CD4-positive, alpha-beta memory T cell (primary cell): ENCODE measurements at regions of chr6 and their contacts with region 1.

Region 1: DNA sequence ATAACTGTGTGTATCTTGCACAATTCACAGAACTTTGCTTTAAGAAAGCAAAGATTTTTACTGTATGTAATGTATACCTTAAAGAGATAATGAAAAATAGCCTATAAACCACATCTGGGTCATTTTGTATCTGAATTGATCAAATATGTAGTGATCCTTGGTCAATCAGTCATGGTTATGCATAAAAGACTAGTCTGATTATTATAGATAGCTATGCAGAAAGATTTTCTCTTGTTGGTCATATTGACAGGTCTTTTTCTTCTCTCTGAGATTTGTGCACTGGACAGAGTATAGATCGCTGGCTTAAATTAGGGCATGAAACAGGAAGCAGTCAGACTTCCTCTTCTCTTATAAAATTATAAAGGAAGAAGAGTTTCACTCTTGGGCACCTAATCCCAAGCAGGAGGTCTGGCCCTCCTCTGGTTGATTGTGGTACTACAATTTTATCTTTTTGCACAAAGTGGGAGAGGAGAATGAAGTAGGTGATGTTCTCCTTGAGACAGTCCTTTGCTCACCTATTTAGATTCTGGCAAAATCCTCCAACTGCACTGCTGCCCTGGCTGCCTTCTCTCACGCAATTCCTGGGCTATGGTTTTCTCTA is 380.9 kb upstream of the RGS17 start:
- DNase-seq: peak in 2 of 5 donors; percentile 3 to 5
- H3K4me3 ChIP-seq: no peak overlapping the region
- H3K4me3 Mint-ChIP-seq: no peak overlapping the region
- H3K27ac ChIP-seq: no peak overlapping the region
- H3K27ac Mint-ChIP-seq: no peak overlapping the region
- H3K4me1 ChIP-seq: no peaks in the 10 kb centered on the region
- H3K4me1 Mint-ChIP-seq: peaks cover 0 to 1% (median 0%) of the 10 kb centered on the region in 4 donors
- H3K27me3 ChIP-seq: no peaks in the 10 kb centered on the region
- H3K27me3 Mint-ChIP-seq: no peaks in the 10 kb centered on the region

Region 2: GRCh38 chr6:153032255-153032882 is 479.6 kb before region 1 on chr6:
- CTCF ChIA-PET with region 1: no interaction called
- POLR2A ChIA-PET with region 1: no interaction called
- intact Hi-C with region 1: loop called (anchors 5 kb)
- DNase-seq: no peak
- H3K4me3 ChIP-seq: no peak overlapping the region
- H3K4me3 Mint-ChIP-seq: no peak overlapping the region
- H3K27ac ChIP-seq: no peak overlapping the region
- H3K27ac Mint-ChIP-seq: no peak overlapping the region
- H3K4me1 ChIP-seq: no peaks in the 10 kb centered on the region
- H3K4me1 Mint-ChIP-seq: no peaks in the 10 kb centered on the region
- H3K27me3 ChIP-seq: no peaks in the 10 kb centered on the region
- H3K27me3 Mint-ChIP-seq: peaks cover 10 to 20% of the 10 kb centered on the region in 2 donors